CD8-positive, alpha-beta T cell (primary cell): ENCODE measurements at regions of chr10 and their contacts with region 1.

Region 1: DNA sequence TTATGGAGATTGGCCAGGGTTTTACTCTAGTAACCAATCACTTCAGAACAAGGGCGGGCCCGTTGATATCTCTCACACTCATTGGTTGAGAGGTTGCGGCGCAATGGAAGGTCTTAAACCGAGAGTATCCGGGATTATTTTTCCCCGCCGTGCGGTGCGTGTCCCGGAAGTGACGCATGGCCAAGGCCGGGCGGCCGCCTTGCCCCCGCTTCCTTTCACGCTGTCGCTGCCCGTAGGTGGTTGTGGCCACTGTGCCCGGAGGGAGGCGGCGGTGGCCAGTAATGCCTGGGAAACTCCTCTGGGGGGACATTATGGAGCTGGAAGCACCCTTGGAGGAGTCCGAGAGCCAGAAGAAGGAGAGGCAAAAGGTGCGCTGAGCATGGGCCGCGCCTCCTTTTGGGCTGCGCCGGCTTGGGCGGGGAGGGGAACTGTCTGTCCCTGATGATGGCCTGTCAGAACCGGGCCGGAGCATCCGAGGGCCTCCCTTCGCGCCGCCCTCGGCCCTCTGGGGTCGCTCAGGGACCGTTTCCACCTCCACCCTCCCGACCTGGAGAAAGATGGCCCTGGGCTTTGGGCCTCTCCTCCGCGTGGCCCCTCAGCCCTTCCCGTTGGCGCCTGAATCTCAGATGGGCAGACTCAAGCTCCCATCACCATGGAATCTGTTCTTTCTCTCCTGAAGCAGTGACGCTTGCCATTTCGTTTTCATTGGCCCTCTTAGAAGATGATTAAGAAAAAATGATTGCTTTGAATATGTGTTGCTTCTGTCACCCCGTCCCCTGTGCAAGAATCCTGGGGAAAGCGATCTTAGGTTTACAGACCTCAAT is at the start of gene DDX50:
- DNase-seq: peak; percentile 88 to 99 (median 95)
- ATAC-seq: peak; percentile 95
- H3K4me3 ChIP-seq: peak within 1 kb of the TSS; percentile 87 to 90
- H3K4me3 Mint-ChIP-seq: peak within 1 kb of the TSS; percentile 98
- H3K27ac ChIP-seq: peak within 1 kb of the TSS; percentile 95 to 97
- H3K27ac Mint-ChIP-seq: peak within 1 kb of the TSS; percentile 99
- H3K4me1 ChIP-seq: peaks cover 24% of the 10 kb centered on the region
- H3K4me1 Mint-ChIP-seq: peaks cover 41% of the 10 kb centered on the region
- H3K27me3 ChIP-seq: no peaks in the 10 kb centered on the region
- H3K27me3 Mint-ChIP-seq: no peaks in the 10 kb centered on the region
- CTCF ChIP-seq: no peak
- total RNA-seq, gene DDX50: 49.4 to 56.3 TPM

Region 2: DNA sequence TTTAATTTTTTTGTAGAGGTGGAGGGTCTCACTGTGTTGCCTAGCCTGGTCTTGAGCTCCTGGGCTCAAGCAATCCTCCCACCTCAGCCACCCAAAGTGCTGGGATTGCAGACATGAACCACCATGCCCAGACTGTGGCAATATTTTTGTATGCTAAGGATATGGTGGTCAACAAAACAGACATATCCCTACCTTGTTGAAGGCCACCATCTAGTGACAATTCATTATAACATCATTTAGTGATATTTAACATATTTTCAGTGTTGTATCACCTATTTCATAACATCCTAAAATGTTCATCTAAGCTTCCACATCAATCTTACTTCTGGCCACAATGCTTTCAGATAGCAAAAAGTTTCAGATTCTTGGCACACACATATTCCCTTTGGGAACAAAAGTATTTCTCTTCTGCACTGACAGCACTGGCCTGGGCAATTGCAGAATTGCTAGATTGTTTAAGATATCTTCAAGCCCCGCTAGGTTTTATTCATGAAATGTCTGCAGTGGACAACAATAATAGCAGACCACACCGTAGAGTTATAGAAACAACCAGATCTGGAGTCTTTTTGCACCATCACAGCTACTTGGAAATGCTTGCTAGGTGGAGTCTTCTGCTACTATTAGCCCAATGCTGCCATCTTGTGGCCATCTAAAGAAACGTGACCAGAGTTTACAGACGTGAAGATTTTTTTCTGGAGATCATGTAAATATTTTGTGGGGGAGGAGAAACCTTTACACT is 1121.7 kb before region 1 on chr10:
- CTCF ChIA-PET with region 1: no interaction called
- POLR2A ChIA-PET with region 1: no interaction called
- intact Hi-C with region 1: loop called in 1 of 2 experiments (anchors 10 kb)
- DNase-seq: peak; percentile 28 to 87 (median 68)
- ATAC-seq: peak; percentile 85
- H3K4me3 ChIP-seq: no peak overlapping the region
- H3K4me3 Mint-ChIP-seq: no peak overlapping the region
- H3K27ac ChIP-seq: no peak overlapping the region
- H3K27ac Mint-ChIP-seq: no peak overlapping the region
- H3K4me1 ChIP-seq: no peaks in the 10 kb centered on the region
- H3K4me1 Mint-ChIP-seq: peaks cover 16% of the 10 kb centered on the region
- H3K27me3 ChIP-seq: no peaks in the 10 kb centered on the region
- H3K27me3 Mint-ChIP-seq: no peaks in the 10 kb centered on the region
- CTCF ChIP-seq: peak; percentile 93

Region 3: GRCh38 chr10:68074775-68075549 is 826.4 kb before region 1 on chr10 and contains the start of gene HERC4:
- CTCF ChIA-PET with region 1: no interaction called
- POLR2A ChIA-PET with region 1: no interaction called
- intact Hi-C with region 1: loop called (anchors 2 to 10 kb)
- DNase-seq: peak; percentile 83 to 96 (median 90)
- ATAC-seq: peak; percentile 90
- H3K4me3 ChIP-seq: peak within 1 kb of the TSS; percentile 96
- H3K4me3 Mint-ChIP-seq: peak within 1 kb of the TSS; percentile 96
- H3K27ac ChIP-seq: peak within 1 kb of the TSS; percentile 91 to 96
- H3K27ac Mint-ChIP-seq: peak within 1 kb of the TSS; percentile 93
- H3K4me1 ChIP-seq: peaks cover 38% of the 10 kb centered on the region
- H3K4me1 Mint-ChIP-seq: peaks cover 40% of the 10 kb centered on the region
- H3K27me3 ChIP-seq: no peaks in the 10 kb centered on the region
- H3K27me3 Mint-ChIP-seq: no peaks in the 10 kb centered on the region
- CTCF ChIP-seq: no peak
- total RNA-seq, gene HERC4: 28.4 to 29.2 TPM

Region 4: GRCh38 chr10:68406815-68407548 is 494.3 kb before region 1 on chr10 and contains the start of gene RUFY2:
- CTCF ChIA-PET with region 1: no interaction called
- POLR2A ChIA-PET with region 1: interaction called, 3 read pairs
- intact Hi-C with region 1: loop called (anchors 5 to 10 kb)
- DNase-seq: peak; percentile 56 to 89 (median 76)
- ATAC-seq: peak; percentile 92
- H3K4me3 ChIP-seq: peak within 1 kb of the TSS; percentile 95 to 99
- H3K4me3 Mint-ChIP-seq: peak within 1 kb of the TSS; percentile 92
- H3K27ac ChIP-seq: peak within 1 kb of the TSS; percentile 69 to 78
- H3K27ac Mint-ChIP-seq: peak within 1 kb of the TSS; percentile 82
- H3K4me1 ChIP-seq: peaks cover 10% of the 10 kb centered on the region
- H3K4me1 Mint-ChIP-seq: peaks cover 19% of the 10 kb centered on the region
- H3K27me3 ChIP-seq: no peaks in the 10 kb centered on the region
- H3K27me3 Mint-ChIP-seq: no peaks in the 10 kb centered on the region
- CTCF ChIP-seq: peak; percentile 81
- total RNA-seq, gene RUFY2: 11.7 to 13.7 TPM

Region 5: DNA sequence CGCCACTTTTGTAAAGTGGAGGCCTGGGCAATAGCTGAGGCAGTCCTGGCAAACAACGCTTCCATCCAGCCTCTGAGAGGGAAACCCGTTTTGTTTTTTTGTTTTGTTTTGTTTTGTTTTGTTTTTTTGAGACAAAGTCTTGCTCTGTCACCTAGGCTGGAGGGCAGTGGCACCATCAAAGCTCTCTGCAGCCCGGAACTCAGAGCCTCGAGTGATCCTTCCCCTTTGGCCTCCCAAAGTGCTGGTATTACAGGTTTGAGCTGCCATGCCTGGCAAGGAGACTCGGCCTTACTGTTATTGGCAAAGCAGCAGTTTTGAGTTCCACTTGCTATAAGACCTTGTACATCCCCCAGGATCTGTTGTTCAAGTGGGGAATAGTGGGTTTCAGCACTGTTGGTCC is 363.5 kb before region 1 on chr10:
- CTCF ChIA-PET with region 1: no interaction called
- POLR2A ChIA-PET with region 1: no interaction called
- intact Hi-C with region 1: no loop called
- DNase-seq: no peak
- ATAC-seq: no peak
- H3K4me3 ChIP-seq: no peak overlapping the region
- H3K4me3 Mint-ChIP-seq: no peak overlapping the region
- H3K27ac ChIP-seq: no peak overlapping the region
- H3K27ac Mint-ChIP-seq: no peak overlapping the region
- H3K4me1 ChIP-seq: no peaks in the 10 kb centered on the region
- H3K4me1 Mint-ChIP-seq: no peaks in the 10 kb centered on the region
- H3K27me3 ChIP-seq: no peaks in the 10 kb centered on the region
- H3K27me3 Mint-ChIP-seq: no peaks in the 10 kb centered on the region
- CTCF ChIP-seq: no peak

Region 6: GRCh38 chr10:68720793-68721672 is 180.3 kb before region 1 on chr10 and contains the start of gene CCAR1:
- CTCF ChIA-PET with region 1: no interaction called
- POLR2A ChIA-PET with region 1: no interaction called
- intact Hi-C with region 1: loop called (anchors 1 kb)
- DNase-seq: peak; percentile 92 to 99 (median 97)
- ATAC-seq: peak; percentile 95
- H3K4me3 ChIP-seq: peak within 1 kb of the TSS; percentile 87 to 98
- H3K4me3 Mint-ChIP-seq: peak within 1 kb of the TSS; percentile 100
- H3K27ac ChIP-seq: peak within 1 kb of the TSS; percentile 83 to 95
- H3K27ac Mint-ChIP-seq: peak within 1 kb of the TSS; percentile 99
- H3K4me1 ChIP-seq: peaks cover 10% of the 10 kb centered on the region
- H3K4me1 Mint-ChIP-seq: peaks cover 20% of the 10 kb centered on the region
- H3K27me3 ChIP-seq: no peaks in the 10 kb centered on the region
- H3K27me3 Mint-ChIP-seq: no peaks in the 10 kb centered on the region
- CTCF ChIP-seq: no peak
- total RNA-seq, gene CCAR1: 70.8 to 79.1 TPM

Region 7: DNA sequence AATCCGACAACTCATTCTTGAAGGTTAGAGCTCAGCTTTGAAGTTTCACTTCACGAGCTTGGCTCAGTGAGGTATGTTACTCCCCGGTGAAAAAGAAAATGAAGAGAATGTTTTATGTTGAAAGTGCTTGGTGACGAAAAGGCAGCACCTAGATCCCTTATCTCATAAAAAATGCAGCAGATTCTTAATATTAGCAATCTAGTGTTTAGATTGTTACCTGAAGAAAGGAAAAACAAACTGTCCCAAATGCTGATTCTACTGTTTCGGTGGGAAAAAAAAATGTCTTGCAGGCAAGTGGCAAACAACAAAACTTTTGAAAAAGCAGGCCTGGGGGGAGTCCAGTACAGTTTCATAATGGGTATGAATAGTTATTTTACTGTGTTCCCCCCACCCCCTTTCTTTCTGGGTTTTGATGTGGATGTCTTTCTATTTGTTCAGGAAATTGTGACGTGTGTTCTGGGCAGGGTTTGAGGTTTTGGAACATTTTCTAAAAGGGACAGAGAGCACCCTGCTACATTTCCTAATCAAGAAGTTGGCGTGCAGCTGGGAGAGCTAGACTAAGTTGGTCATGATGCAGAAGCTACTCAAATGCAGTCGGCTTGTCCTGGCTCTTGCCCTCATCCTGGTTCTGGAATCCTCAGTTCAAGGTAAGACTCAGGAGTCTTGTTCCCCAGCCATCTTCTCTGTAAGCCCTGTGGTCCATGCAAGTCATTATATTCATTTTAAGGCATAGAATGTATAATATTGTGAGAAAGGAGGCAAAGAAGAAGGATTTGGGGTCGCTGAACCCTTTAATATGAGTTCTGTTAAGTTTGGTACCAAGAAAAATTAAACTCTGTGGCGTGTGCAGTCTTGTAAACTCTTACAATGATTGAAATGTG is 186.5 kb after region 1 on chr10 and contains the start of gene SRGN:
- CTCF ChIA-PET with region 1: no interaction called
- POLR2A ChIA-PET with region 1: no interaction called
- intact Hi-C with region 1: loop called in 1 of 2 experiments (anchors 1 kb)
- DNase-seq: peak; percentile 57 to 96 (median 76)
- ATAC-seq: peak; percentile 57
- H3K4me3 ChIP-seq: peak within 1 kb of the TSS; percentile 62 to 89
- H3K4me3 Mint-ChIP-seq: peak within 1 kb of the TSS; percentile 95
- H3K27ac ChIP-seq: peak within 1 kb of the TSS; percentile 97
- H3K27ac Mint-ChIP-seq: peak within 1 kb of the TSS; percentile 99
- H3K4me1 ChIP-seq: peaks cover 41% of the 10 kb centered on the region
- H3K4me1 Mint-ChIP-seq: peaks cover 57% of the 10 kb centered on the region
- H3K27me3 ChIP-seq: no peaks in the 10 kb centered on the region
- H3K27me3 Mint-ChIP-seq: no peaks in the 10 kb centered on the region
- CTCF ChIP-seq: no peak
- total RNA-seq, gene SRGN: 570 to 583 TPM

Region 8: DNA sequence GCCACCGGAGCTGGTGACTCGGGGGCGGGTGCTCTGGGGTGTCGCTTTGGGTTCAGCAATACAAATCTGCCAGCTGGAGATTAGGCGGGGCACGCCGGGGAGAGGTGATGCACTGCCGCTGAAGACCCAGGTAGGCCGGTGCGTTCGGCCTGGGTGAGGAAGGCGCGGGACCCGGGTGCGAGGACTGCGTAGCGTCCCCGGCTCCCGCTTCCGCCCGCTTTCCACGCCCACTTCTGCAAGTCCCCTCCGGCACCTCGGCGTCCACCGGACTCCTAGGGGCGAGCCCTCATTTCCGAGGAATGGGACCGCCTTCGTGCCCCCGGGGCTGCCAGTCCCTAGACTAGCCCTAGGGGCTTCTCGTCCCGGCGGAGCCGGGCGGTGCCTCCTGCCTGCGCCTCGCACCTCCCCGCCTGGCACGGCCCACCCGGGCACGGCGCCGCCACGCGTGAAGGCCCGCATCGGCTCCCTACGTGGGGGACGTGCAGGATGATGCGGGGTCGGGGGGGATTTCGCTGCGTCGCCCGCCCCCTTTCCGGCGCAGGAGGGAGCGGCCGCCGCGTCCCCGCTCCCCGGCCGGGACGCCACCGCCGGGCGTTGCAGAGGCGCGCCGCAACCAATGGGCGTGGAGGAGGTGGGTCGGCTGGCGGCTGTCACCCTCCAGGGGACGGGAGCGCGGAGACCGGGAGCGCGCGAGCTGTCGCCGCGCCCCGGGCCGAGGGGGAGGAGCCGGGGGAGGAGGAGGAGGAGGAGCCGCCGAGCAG is 417.0 kb after region 1 on chr10:
- CTCF ChIA-PET with region 1: no interaction called
- POLR2A ChIA-PET with region 1: no interaction called
- intact Hi-C with region 1: loop called in 1 of 2 experiments (anchors 10 kb)
- DNase-seq: peak; percentile 81 to 96 (median 90)
- ATAC-seq: peak; percentile 89
- H3K4me3 ChIP-seq: peak overlapping the region; percentile 92 to 99
- H3K4me3 Mint-ChIP-seq: peak overlapping the region; percentile 95
- H3K27ac ChIP-seq: peak overlapping the region; percentile 89 to 92
- H3K27ac Mint-ChIP-seq: peak overlapping the region; percentile 89
- H3K4me1 ChIP-seq: peaks cover 32% of the 10 kb centered on the region
- H3K4me1 Mint-ChIP-seq: peaks cover 38% of the 10 kb centered on the region
- H3K27me3 ChIP-seq: no peaks in the 10 kb centered on the region
- H3K27me3 Mint-ChIP-seq: no peaks in the 10 kb centered on the region
- CTCF ChIP-seq: no peak